Panc1 (cell line): ENCODE measurements at regions of chr10 and their contacts with region 1.

Region 1: GRCh38 chr10:103966671-103967447 is at the start of gene SLK:
- DNase-seq: peak; percentile 24
- ATAC-seq: peak; percentile 90
- H3K4me3 ChIP-seq: peak within 1 kb of the TSS; percentile 95 to 99
- H3K27ac ChIP-seq: peak within 1 kb of the TSS; percentile 97
- H3K4me1 ChIP-seq: peaks cover 16% of the 10 kb centered on the region
- H3K27me3 ChIP-seq: no peaks in the 10 kb centered on the region
- CTCF ChIP-seq: no peak
- total RNA-seq, gene SLK: 40.8 TPM

Region 2: GRCh38 chr10:103832806-103833205 is 134.1 kb before region 1 on chr10:
- CTCF ChIA-PET with region 1: no interaction called
- POLR2A ChIA-PET with region 1: interaction called, 10 read pairs
- in situ Hi-C with region 1: no loop called
- intact Hi-C with region 1: no loop called
- DNase-seq: no peak
- ATAC-seq: no peak
- H3K4me3 ChIP-seq: no peak overlapping the region
- H3K27ac ChIP-seq: no peak overlapping the region
- H3K4me1 ChIP-seq: 0 out of 2 replicates have a peak, but pooled peaks cover 4% of the 10 kb centered on the region
- H3K27me3 ChIP-seq: no peaks in the 10 kb centered on the region
- CTCF ChIP-seq: no peak

Region 3: DNA sequence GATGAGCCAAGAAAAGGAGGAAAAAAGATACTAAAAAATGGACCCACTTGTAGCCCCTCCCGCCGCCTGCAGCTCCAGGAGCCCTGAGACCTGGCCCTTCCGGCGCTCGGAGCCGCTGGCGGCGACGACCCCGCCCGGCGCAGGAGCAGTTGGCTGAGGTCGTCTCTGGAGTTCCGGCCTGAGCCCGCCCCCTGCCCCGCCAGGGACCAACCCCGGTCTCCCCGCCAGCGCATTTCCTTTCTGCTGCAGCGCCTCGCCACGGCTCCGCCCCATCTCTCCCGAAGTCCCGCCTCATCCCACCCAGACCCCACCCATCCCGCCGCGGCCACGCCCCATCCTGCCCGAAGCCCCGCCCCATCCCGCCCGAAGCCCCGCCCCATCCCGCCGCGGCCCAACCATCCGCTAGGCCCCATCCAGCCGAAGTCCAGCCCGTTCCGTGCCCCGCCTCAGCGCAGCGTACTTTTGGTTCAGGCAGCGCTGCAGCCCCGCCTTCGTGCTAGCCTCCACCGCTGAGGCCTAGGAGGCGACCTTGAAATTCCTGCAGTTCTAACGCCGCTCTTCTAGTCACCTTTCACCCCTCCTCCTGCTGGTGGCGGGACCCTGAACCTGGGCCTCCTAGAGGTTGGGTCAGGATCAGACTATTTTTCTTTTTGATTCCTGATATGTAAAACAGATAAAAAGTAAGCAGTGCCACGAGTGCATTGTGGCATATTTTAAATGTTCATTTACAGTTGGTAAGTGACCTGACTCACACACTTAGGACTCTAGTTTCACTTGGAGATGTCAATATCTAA is 48.6 kb before region 1 on chr10 and contains the start of gene STN1:
- CTCF ChIA-PET with region 1: no interaction called
- POLR2A ChIA-PET with region 1: interaction called, 3 read pairs
- in situ Hi-C with region 1: no loop called
- intact Hi-C with region 1: loop called (anchors 5 kb)
- DNase-seq: peak; percentile 76
- ATAC-seq: peak; percentile 98
- H3K4me3 ChIP-seq: peak within 1 kb of the TSS; percentile 86 to 90
- H3K27ac ChIP-seq: peak within 1 kb of the TSS; percentile 98
- H3K4me1 ChIP-seq: peaks cover 28% of the 10 kb centered on the region
- H3K27me3 ChIP-seq: no peaks in the 10 kb centered on the region
- CTCF ChIP-seq: no peak
- total RNA-seq, gene STN1: 28.9 TPM

Region 4: DNA sequence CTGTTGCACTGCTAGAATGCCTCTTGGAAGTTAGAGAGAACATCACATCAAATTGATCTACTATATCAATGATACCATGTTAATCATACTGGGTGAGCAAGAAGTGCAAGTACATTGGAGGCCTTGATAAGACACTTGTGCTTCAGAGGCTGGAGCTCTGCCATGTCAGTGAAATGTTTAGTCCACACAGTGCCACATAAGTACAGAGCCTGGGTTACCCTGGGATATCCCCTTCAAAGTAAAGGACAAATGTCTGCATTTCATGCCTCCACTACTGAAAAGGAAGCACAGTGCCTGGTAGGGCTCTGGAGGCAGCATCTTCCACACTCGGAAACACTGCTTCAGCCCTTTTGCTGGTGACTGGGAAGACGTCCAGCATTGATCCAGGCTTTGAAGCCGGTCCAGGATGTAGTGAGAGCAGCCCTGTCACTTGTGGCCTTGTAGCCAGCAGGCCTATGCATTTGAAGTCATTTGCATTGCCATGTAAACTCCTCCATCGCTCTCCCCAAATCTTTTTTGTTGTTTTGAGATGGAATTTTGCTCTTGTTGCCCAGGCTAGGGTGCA is 33.2 kb before region 1 on chr10:
- CTCF ChIA-PET with region 1: no interaction called
- POLR2A ChIA-PET with region 1: no interaction called
- in situ Hi-C with region 1: no loop called
- intact Hi-C with region 1: no loop called
- DNase-seq: no peak
- ATAC-seq: no peak
- H3K4me3 ChIP-seq: no peak overlapping the region
- H3K27ac ChIP-seq: no peak overlapping the region
- H3K4me1 ChIP-seq: no peaks in the 10 kb centered on the region
- H3K27me3 ChIP-seq: no peaks in the 10 kb centered on the region
- CTCF ChIP-seq: no peak

Region 5: GRCh38 chr10:104002911-104003310 is 36.1 kb after region 1 on chr10:
- CTCF ChIA-PET with region 1: no interaction called
- POLR2A ChIA-PET with region 1: no interaction called
- in situ Hi-C with region 1: no loop called
- intact Hi-C with region 1: no loop called
- DNase-seq: no peak
- ATAC-seq: no peak
- H3K4me3 ChIP-seq: no peak overlapping the region
- H3K27ac ChIP-seq: no peak overlapping the region
- H3K4me1 ChIP-seq: no peaks in the 10 kb centered on the region
- H3K27me3 ChIP-seq: no peaks in the 10 kb centered on the region
- CTCF ChIP-seq: no peak